KBM-7 (cell line): ENCODE measurements at regions of chr5 and their contacts with region 1.

Region 1: GRCh38 chr5:142145106-142145900 is 36.7 kb downstream of the NDFIP1 start:
- DNase-seq: peak; percentile 81

Region 2: GRCh38 chr5:141778206-141778605 is 367.1 kb before region 1 on chr5:
- in situ Hi-C with region 1: no loop called
- DNase-seq: no peak

Region 3: GRCh38 chr5:142024771-142025304 is 120.5 kb before region 1 on chr5:
- in situ Hi-C with region 1: loop called (anchors 25 kb)
- DNase-seq: peak; percentile 72